ENCODE measurements at regions of chr2 and their contacts with region 1.

Region 1: GRCh38 chr2:119028327-119029174 is 86.6 kb downstream of the MARCO start:
- DNase-seq: peak in 1 of 2 experiments; percentile 84
- H3K4me3 ChIP-seq: no peak overlapping the region
- H3K27ac ChIP-seq: no peak overlapping the region
- H3K4me1 ChIP-seq: no peaks in the 10 kb centered on the region; a peak in 1 of 7 replicates
- H3K27me3 ChIP-seq: no peaks in the 10 kb centered on the region
- CTCF ChIP-seq: peak; percentile 59 to 78 (median 62)
- EP300 ChIP-seq: no peak
- POLR2A ChIP-seq: no peak
- RAD21 ChIP-seq: peak; percentile 66 to 81

Region 2: DNA sequence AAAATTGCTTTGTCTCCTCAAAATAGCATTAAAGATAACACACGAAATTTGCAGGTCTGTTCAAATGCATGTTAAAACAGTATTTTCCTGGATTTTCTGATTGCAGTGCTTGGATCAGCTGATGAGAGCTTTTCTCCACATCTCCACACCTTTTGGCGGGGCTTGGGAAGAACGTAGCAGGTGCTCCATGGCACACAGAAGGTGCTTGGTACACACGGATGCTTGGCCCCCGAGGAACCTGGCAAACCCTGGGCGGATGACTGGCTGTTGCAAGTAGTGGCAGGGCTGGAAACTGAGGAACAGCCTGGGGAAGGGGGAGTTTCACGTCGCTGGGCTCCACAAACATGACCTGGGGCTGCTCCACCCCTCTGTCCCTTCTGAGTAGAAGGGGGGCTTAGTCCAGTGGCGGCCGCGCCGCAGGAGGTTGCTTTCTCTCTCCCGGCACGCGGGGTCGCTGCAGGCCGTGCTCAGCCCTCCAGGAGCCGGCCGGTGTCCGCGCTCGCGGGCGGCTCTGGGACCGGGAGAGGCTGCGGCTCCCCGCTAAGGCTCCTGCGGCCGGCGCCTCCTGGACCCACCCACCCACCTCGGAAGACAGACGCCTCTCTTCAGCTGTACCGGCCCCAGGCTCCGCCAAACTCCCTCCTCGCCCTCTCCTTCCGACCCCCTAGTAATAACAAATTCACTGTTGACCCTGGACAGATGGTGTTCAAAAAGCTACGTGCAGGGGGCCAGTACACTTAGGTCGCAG is 17.2 kb before region 1 on chr2:
- CTCF ChIA-PET with region 1: interaction called, 61 read pairs
- POLR2A ChIA-PET with region 1: interaction called, 3 read pairs
- DNase-seq: peak; percentile 21 to 87
- H3K4me3 ChIP-seq: peak overlapping the region in 3 of 4 experiments; percentile 6 to 51 (median 19); a peak in 4 of 8 replicates
- H3K27ac ChIP-seq: no peak overlapping the region
- H3K4me1 ChIP-seq: peaks cover 0 to 3% (median under 1%) of the 10 kb centered on the region in 4 experiments; a peak in 4 of 7 replicates
- H3K27me3 ChIP-seq: peaks cover 0 to 4% (median 3%) of the 10 kb centered on the region in 4 experiments; a peak in 5 of 7 replicates
- CTCF ChIP-seq: peak; percentile 73 to 80 (median 74)
- EP300 ChIP-seq: no peak
- POLR2A ChIP-seq: no peak
- RAD21 ChIP-seq: peak; percentile 88 to 92

Region 3: GRCh38 chr2:119040730-119041129 is 12.2 kb after region 1 on chr2:
- CTCF ChIA-PET with region 1: interaction called, 14 read pairs
- POLR2A ChIA-PET with region 1: no interaction called
- DNase-seq: no peak
- H3K4me3 ChIP-seq: no peak overlapping the region
- H3K27ac ChIP-seq: no peak overlapping the region
- H3K4me1 ChIP-seq: no peaks in the 10 kb centered on the region
- H3K27me3 ChIP-seq: no peaks in the 10 kb centered on the region
- CTCF ChIP-seq: no peak
- EP300 ChIP-seq: no peak
- POLR2A ChIP-seq: no peak
- RAD21 ChIP-seq: no peak

Region 4: GRCh38 chr2:119158563-119159347 is 130.2 kb after region 1 on chr2 and contains the start of gene C1QL2:
- CTCF ChIA-PET with region 1: interaction called, 12 read pairs
- POLR2A ChIA-PET with region 1: no interaction called
- DNase-seq: peak in 1 of 2 experiments; percentile 74
- H3K4me3 ChIP-seq: peak within 1 kb of the TSS; percentile 61 to 73 (median 68)
- H3K27ac ChIP-seq: no peak within 1 kb of the TSS
- H3K4me1 ChIP-seq: peaks cover 4 to 25% (median 18%) of the 10 kb centered on the region in 4 experiments
- H3K27me3 ChIP-seq: peaks cover 29 to 41% (median 38%) of the 10 kb centered on the region in 4 experiments
- CTCF ChIP-seq: peak; percentile 46 to 56 (median 48)
- EP300 ChIP-seq: no peak
- POLR2A ChIP-seq: no peak
- RAD21 ChIP-seq: peak; percentile 28 to 53; a peak in 3 of 4 replicates
- total RNA-seq, gene C1QL2: 0.88 and 1.1 TPM in 2 replicates

Region 5: GRCh38 chr2:119482481-119483394 is 454.2 kb after region 1 on chr2:
- CTCF ChIA-PET with region 1: no interaction called
- POLR2A ChIA-PET with region 1: no interaction called
- DNase-seq: peak in 1 of 2 experiments; percentile 46
- H3K4me3 ChIP-seq: no peak overlapping the region
- H3K27ac ChIP-seq: no peak overlapping the region
- H3K4me1 ChIP-seq: peaks cover 0 to 7% (median 1%) of the 10 kb centered on the region in 4 experiments; a peak in 4 of 7 replicates
- H3K27me3 ChIP-seq: no peaks in the 10 kb centered on the region; a peak in 1 of 7 replicates
- CTCF ChIP-seq: no peak
- EP300 ChIP-seq: no peak
- POLR2A ChIP-seq: no peak
- RAD21 ChIP-seq: no peak